H1 (cell line): ENCODE measurements at regions of chr2 and their contacts with region 1.

Region 1: DNA sequence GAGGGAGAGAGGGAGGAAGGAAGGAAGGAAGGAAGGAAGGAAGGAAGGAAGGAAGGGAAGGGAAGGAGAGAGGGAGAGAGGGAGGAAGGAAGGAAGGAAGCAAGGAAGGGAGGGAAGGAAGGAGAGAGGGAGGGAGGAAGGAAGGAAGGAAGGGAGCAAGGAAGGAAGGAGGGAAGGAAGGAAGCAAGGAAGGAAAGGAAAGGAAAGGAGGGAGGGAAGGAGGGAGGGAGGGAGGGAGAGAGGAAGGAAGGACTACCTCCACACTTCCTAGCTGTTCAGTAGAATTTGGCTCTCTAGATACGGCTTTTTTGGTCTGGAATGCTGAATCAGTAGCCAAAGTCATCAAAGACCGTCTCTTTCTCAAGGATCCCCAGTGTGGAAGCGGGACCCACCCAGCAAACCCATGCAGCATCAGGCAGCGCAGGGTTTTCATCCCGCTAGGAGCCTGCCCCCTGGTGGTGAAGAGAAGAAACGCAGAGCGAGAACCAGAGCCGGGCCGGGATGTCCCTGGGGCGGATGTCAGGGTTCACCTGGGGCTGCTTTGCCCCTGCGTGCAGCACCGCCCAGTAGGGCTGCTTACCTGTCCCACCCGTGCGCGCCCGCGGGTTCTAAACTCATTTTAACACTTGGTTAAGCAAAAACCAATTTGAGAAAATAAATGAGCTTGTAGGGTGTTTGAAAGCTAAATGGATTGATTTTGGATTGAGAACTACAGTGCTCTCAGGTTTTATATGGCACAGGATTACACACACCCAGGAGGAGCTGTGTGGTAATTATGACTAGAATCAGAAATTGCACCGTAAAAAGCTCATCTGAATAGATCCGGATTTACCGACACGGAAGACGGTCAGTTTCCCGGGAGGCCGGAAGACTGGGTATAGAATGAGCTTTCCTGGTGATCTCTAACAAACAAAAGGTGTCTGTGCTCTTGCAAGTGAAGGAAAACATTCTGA is 48.1 kb upstream of the ARL4C start:
- DNase-seq: peak; percentile 29 to 95
- H3K4me3 ChIP-seq: peak overlapping the region in 1 of 4 experiments; percentile 50; a peak in 4 of 8 replicates
- H3K27ac ChIP-seq: no peak overlapping the region
- H3K4me1 ChIP-seq: peaks cover 8 to 27% (median 12%) of the 10 kb centered on the region in 4 experiments; a peak in 6 of 7 replicates
- H3K27me3 ChIP-seq: peaks cover 0 to 6% (median 5%) of the 10 kb centered on the region in 4 experiments; a peak in 6 of 7 replicates
- CTCF ChIP-seq: peak; percentile 77 to 92 (median 87)
- EP300 ChIP-seq: no peak
- POLR2A ChIP-seq: no peak
- RAD21 ChIP-seq: peak; percentile 85 to 92

Region 2: DNA sequence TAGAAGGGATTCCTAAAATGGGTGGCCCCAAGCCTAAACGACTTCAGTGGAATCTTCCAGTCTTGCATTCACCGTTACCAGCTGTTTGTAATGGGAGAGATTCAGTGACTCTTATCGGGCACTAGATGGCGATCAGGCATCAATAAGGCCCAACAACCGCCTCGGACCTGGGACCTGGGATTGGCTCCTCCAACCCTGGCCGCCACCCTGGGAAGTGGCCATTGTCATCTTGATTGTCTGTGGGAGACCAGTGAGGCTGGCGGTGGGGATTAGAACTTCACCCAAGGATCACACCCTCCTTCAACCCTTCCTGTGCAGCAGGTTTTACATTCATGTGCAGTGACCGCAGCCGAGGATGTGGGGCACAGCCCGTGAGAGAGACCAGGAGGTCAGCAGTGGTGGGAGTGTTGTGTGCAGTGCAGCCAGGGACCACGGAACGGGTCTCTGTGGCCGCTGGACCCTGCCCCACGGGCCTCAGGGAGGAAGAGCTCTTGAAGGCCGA is 409.2 kb before region 1 on chr2:
- CTCF ChIA-PET with region 1: interaction called, 11 read pairs
- POLR2A ChIA-PET with region 1: no interaction called
- DNase-seq: peak; percentile 49 to 75
- H3K4me3 ChIP-seq: no peak overlapping the region
- H3K27ac ChIP-seq: no peak overlapping the region
- H3K4me1 ChIP-seq: peaks cover 0 to 3% (median 0%) of the 10 kb centered on the region in 4 experiments; a peak in 2 of 7 replicates
- H3K27me3 ChIP-seq: no peaks in the 10 kb centered on the region
- CTCF ChIP-seq: peak; percentile 60 to 88 (median 87)
- EP300 ChIP-seq: no peak
- POLR2A ChIP-seq: no peak
- RAD21 ChIP-seq: peak; percentile 96 to 98

Region 3: GRCh38 chr2:234500394-234501006 is 44.4 kb before region 1 on chr2:
- CTCF ChIA-PET with region 1: interaction called, 11 read pairs
- POLR2A ChIA-PET with region 1: no interaction called
- DNase-seq: peak in 1 of 2 experiments; percentile 57
- H3K4me3 ChIP-seq: no peak overlapping the region
- H3K27ac ChIP-seq: no peak overlapping the region
- H3K4me1 ChIP-seq: peaks cover 4 to 16% (median 10%) of the 10 kb centered on the region in 4 experiments
- H3K27me3 ChIP-seq: peaks cover 0 to 11% (median 3%) of the 10 kb centered on the region in 4 experiments; a peak in 4 of 7 replicates
- CTCF ChIP-seq: peak; percentile 11 to 79 (median 64)
- EP300 ChIP-seq: no peak
- POLR2A ChIP-seq: no peak
- RAD21 ChIP-seq: peak; percentile 91 to 97

Region 4: GRCh38 chr2:234533626-234534025 is 11.3 kb before region 1 on chr2:
- CTCF ChIA-PET with region 1: interaction called, 21 read pairs
- POLR2A ChIA-PET with region 1: no interaction called
- DNase-seq: no peak
- H3K4me3 ChIP-seq: no peak overlapping the region
- H3K27ac ChIP-seq: no peak overlapping the region
- H3K4me1 ChIP-seq: peaks cover 0 to 12% (median 3%) of the 10 kb centered on the region in 4 experiments; a peak in 6 of 7 replicates
- H3K27me3 ChIP-seq: no peaks in the 10 kb centered on the region
- CTCF ChIP-seq: no peak
- EP300 ChIP-seq: no peak
- POLR2A ChIP-seq: no peak
- RAD21 ChIP-seq: no peak

Region 5: DNA sequence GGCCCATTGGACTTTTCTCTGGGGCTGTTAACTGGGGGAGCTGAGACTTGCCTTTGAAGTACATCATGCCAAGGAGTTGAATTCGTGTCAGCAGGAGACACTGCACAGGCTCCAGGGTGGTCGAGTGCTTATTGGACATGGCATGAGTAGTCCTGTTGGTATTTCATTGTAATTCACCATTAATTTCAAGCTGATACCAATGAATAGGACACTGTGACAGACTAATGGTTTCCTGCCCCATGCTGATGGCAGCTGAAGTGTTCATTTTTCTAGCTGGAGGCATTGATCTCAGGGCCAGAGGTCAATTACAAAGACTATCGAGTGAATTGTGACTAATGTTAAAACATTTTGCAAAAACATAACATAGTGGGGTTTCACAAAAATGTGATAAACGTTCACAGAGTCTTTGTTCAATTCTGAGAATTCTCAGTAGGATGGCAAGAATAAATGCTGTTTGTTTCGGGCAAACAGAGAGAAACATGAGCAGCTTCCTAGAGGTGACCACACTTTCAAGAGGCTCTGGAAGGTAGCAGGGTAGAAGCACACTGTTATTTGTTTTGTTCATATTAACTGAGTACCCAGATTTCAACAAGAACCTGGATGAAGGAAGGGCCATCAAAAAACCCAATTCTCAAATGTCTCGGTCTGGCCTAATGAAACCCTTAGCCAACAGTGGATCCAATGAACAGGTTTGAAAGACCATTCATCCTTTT is 42.6 kb after region 1 on chr2:
- CTCF ChIA-PET with region 1: interaction called, 11 read pairs
- POLR2A ChIA-PET with region 1: no interaction called
- DNase-seq: no peak
- H3K4me3 ChIP-seq: no peak overlapping the region
- H3K27ac ChIP-seq: no peak overlapping the region
- H3K4me1 ChIP-seq: peaks cover 0 to 9% (median 0%) of the 10 kb centered on the region in 4 experiments; a peak in 2 of 7 replicates
- H3K27me3 ChIP-seq: no peaks in the 10 kb centered on the region
- CTCF ChIP-seq: no peak
- EP300 ChIP-seq: no peak
- POLR2A ChIP-seq: no peak
- RAD21 ChIP-seq: no peak